K562 (cell line): ENCODE measurements at regions of chr2 and their contacts with region 1.

Region 1: GRCh38 chr2:223101340-223102039 is 49.5 kb downstream of the KCNE4 start:
- DNase-seq: peak; percentile 36 to 71 (median 50)
- ATAC-seq: peak; percentile 97
- H3K4me3 ChIP-seq: no peak overlapping the region
- H3K27ac ChIP-seq: no peak overlapping the region
- H3K4me1 ChIP-seq: peaks cover 0 to 6% of the 10 kb centered on the region in 2 experiments; a peak in 3 of 5 replicates
- H3K27me3 ChIP-seq: no peaks in the 10 kb centered on the region; a peak in 2 of 5 replicates
- CTCF ChIP-seq: peak; percentile 60 to 74 (median 72)
- EP300 ChIP-seq: 0 out of 2 replicates have a peak, but pooled peaks have one; percentile 12
- POLR2A ChIP-seq: no peak
- RAD21 ChIP-seq: peak; percentile 77 to 92

Region 2: DNA sequence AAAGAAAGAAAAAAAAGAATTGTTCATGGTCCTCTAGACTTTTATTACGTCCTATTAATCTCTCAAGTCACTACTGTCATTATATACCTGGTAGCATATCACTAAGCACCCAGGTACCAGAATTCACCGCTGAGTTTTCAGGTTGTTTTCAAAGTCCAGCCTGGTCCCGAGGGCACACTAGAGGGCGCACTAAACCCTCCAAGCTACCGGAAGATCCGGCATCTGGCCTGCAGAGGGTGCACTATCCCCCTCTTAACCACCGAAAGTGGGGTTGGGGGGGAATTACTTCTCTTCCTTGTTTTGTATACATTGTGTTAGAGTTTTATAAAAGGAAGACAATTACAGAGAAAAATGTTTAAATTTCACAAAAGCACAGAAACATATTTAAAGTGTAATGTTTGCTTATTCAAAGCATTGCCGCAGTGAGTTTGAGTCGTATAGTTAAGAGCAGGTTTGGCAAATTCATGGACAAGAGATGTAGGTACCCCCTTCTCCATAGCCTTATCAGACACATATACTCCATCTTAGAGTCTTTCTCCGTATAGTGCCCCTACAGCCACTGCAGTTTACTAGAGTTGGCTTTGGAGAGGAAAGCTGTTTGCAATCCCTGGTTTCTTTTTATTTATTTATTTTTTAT is 410.8 kb before region 1 on chr2:
- CTCF ChIA-PET with region 1: no interaction called
- POLR2A ChIA-PET with region 1: no interaction called
- in situ Hi-C with region 1: no loop called
- intact Hi-C with region 1: loop called (anchors 5 kb)
- DNase-seq: peak; percentile 81 to 86 (median 82)
- ATAC-seq: peak; percentile 98
- H3K4me3 ChIP-seq: no peak overlapping the region
- H3K27ac ChIP-seq: no peak overlapping the region
- H3K4me1 ChIP-seq: peaks cover 0 to 4% of the 10 kb centered on the region in 2 experiments; a peak in 1 of 5 replicates
- H3K27me3 ChIP-seq: no peaks in the 10 kb centered on the region
- CTCF ChIP-seq: peak; percentile 99 to 100 (median 100)
- EP300 ChIP-seq: no peak
- POLR2A ChIP-seq: no peak
- RAD21 ChIP-seq: peak; percentile 72 to 90

Region 3: GRCh38 chr2:222969491-222969890 is 132.0 kb before region 1 on chr2:
- CTCF ChIA-PET with region 1: interaction called, 5 read pairs
- POLR2A ChIA-PET with region 1: interaction called, 3 read pairs
- in situ Hi-C with region 1: no loop called
- intact Hi-C with region 1: loop called (anchors 1 kb)
- DNase-seq: no peak
- ATAC-seq: no peak
- H3K4me3 ChIP-seq: no peak overlapping the region
- H3K27ac ChIP-seq: no peak overlapping the region
- H3K4me1 ChIP-seq: no peaks in the 10 kb centered on the region
- H3K27me3 ChIP-seq: peaks cover 0 to 4% of the 10 kb centered on the region in 2 experiments; a peak in 2 of 5 replicates
- CTCF ChIP-seq: no peak
- EP300 ChIP-seq: no peak
- POLR2A ChIP-seq: no peak
- RAD21 ChIP-seq: no peak

Region 4: GRCh38 chr2:222976521-222977076 is 124.9 kb before region 1 on chr2:
- CTCF ChIA-PET with region 1: interaction called, 5 read pairs
- POLR2A ChIA-PET with region 1: interaction called, 3 read pairs
- in situ Hi-C with region 1: loop called (anchors 5 kb)
- intact Hi-C with region 1: loop called (anchors 1 kb)
- DNase-seq: no peak
- ATAC-seq: no peak
- H3K4me3 ChIP-seq: no peak overlapping the region
- H3K27ac ChIP-seq: no peak overlapping the region
- H3K4me1 ChIP-seq: no peaks in the 10 kb centered on the region
- H3K27me3 ChIP-seq: 0 out of 5 replicates have a peak, but pooled peaks cover 0 to 4% of the 10 kb centered on the region in 2 experiments
- CTCF ChIP-seq: no peak
- EP300 ChIP-seq: no peak
- POLR2A ChIP-seq: no peak
- RAD21 ChIP-seq: no peak

Region 5: GRCh38 chr2:222982010-222982908 is 119.2 kb before region 1 on chr2:
- CTCF ChIA-PET with region 1: no interaction called
- POLR2A ChIA-PET with region 1: no interaction called
- in situ Hi-C with region 1: loop called (anchors 5 kb)
- intact Hi-C with region 1: loop called (anchors 1 kb)
- DNase-seq: peak in 2 of 4 experiments; percentile 21 to 56
- ATAC-seq: peak; percentile 99
- H3K4me3 ChIP-seq: no peak overlapping the region
- H3K27ac ChIP-seq: no peak overlapping the region; the same call in 2 of the 3 replicates
- H3K4me1 ChIP-seq: peaks cover 0 to 6% of the 10 kb centered on the region in 2 experiments; a peak in 1 of 5 replicates
- H3K27me3 ChIP-seq: no peaks in the 10 kb centered on the region
- CTCF ChIP-seq: peak; percentile 58 to 69 (median 58)
- EP300 ChIP-seq: peak; percentile 61; the same call in 1 of the 2 replicates
- POLR2A ChIP-seq: no peak
- RAD21 ChIP-seq: peak; percentile 85 to 93

Region 6: DNA sequence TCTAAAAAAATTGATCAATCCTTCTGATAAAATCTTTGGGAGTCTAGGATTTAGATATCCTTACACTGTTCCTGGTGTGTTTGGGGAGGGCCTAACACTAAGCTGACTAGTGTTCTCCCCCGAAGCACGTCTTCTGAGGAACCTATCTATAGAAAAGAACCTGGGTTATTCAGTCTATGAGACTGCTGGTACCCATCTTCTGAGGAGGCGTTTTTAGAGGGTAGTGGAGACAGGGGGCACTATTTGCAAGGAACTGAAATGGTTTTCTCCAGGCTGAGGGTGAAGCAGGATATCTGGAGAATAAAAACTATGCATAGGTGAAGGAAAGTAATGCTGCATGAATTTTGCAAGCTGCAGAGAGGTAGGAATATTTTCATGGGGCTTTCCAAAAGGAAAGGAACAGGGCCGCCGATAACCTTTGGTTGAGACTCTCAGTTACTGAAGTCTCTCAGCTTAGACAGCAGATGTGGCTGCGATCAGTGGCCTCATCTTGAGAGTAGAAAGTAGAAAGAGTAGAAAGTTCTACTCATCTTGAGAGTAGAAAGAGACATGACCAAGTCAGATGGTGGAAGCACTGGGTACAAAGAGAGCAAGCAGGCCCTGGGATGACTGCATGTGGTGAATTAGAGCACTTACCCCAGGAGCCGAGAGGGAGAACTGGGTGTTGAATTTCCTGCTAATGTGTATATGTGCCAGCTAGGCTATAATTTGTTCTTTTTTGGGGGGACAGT is 81.3 kb before region 1 on chr2:
- CTCF ChIA-PET with region 1: no interaction called
- POLR2A ChIA-PET with region 1: no interaction called
- in situ Hi-C with region 1: no loop called
- intact Hi-C with region 1: loop called (anchors 1 kb)
- DNase-seq: no peak
- ATAC-seq: no peak
- H3K4me3 ChIP-seq: no peak overlapping the region
- H3K27ac ChIP-seq: no peak overlapping the region
- H3K4me1 ChIP-seq: no peaks in the 10 kb centered on the region
- H3K27me3 ChIP-seq: no peaks in the 10 kb centered on the region
- CTCF ChIP-seq: no peak; a peak in 1 of 6 replicates
- EP300 ChIP-seq: no peak
- POLR2A ChIP-seq: no peak
- RAD21 ChIP-seq: peak; percentile 21 to 44; a peak in 3 of 4 replicates

Region 7: DNA sequence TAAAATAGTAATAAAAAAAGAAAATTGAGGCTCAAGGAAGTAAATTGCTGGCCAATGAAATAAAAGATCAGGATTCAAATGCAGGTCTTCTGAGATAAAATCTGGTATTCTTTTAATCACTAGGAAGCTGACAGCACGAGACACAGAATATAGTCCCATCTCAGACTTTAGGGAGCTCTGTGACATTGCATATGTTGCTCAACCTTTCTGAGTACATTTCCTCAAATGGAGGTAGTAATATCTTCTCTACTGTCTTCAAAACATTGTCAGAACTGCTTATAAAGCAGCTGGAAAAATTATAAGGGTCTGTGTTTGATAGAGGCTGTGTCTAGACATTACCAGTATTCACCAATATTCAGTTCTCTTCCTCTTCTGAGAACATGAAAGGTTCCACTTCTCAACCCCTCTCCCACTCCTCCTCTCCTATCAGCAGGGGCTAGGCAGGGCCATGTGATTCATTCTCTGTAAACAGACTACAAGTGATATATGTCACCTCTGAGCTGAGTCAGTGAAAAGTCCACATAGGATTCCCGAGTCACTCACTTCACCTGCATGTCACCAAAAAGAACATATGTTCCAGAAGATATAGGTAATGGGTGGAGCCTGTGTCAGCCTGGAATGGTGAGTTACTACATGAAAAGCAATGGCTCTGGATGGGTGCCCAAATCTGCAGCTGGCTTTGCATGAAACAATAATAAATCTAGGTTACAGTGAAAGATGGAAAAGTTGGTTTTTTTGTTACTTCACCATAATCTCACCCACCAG is 42.4 kb before region 1 on chr2:
- CTCF ChIA-PET with region 1: no interaction called
- POLR2A ChIA-PET with region 1: no interaction called
- in situ Hi-C with region 1: no loop called
- intact Hi-C with region 1: loop called (anchors 1 kb)
- DNase-seq: peak; percentile 48 to 87 (median 66)
- ATAC-seq: peak; percentile 91
- H3K4me3 ChIP-seq: no peak overlapping the region
- H3K27ac ChIP-seq: peak overlapping the region; percentile 65; the same call in 2 of the 3 replicates
- H3K4me1 ChIP-seq: peaks cover 3 to 44% of the 10 kb centered on the region in 2 experiments; a peak in 3 of 5 replicates
- H3K27me3 ChIP-seq: no peaks in the 10 kb centered on the region
- CTCF ChIP-seq: no peak
- EP300 ChIP-seq: peak; percentile 87
- POLR2A ChIP-seq: no peak
- RAD21 ChIP-seq: no peak

Region 8: DNA sequence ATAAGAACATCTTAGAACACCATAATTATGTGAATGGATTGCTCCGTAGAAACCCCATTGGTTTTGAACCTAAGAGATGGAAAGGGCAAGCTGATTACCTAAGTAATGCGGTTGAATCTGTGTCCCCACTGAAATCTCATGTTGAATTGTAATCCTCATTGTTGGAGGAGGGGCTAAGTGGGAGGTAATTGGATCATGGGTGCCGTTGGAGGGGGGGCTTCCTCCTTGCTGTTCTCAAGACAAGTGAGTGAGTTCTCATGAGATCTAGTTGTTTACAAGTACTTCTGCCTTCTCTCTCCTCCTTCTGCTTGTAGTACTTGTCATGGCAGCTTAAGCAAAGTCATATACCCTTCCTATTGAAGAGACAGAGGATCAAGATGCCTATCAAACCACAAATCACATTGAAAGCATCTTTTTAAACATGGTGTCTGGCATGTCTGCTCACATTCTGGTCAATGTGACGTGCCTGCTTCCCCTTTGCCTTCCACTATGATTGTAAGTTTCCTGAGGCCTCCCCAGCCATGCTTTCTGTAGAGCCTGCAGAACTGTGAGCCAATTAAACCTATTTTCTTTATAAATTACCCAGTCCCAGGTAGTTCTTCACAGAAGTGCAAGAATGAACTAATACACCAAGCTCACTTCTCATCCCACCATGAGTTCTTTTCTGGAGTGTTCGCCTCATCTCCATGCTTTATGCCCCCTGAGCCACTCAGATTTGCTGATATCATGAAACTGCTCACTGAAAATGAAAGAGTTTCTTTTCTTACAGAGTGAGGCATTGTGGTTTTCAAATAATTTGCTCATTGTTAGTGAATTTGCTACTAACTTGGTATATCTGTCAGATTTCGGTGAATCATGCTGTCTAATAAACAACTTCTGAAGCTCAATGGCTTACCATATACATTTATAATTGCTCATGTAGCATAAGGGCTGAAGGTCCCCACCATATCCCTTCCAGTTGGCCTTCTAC is 25.9 kb before region 1 on chr2:
- CTCF ChIA-PET with region 1: no interaction called
- POLR2A ChIA-PET with region 1: no interaction called
- in situ Hi-C with region 1: no loop called
- intact Hi-C with region 1: no loop called
- DNase-seq: no peak
- ATAC-seq: no peak
- H3K4me3 ChIP-seq: no peak overlapping the region
- H3K27ac ChIP-seq: no peak overlapping the region
- H3K4me1 ChIP-seq: no peaks in the 10 kb centered on the region; a peak in 2 of 5 replicates
- H3K27me3 ChIP-seq: no peaks in the 10 kb centered on the region
- CTCF ChIP-seq: no peak
- EP300 ChIP-seq: no peak
- POLR2A ChIP-seq: no peak
- RAD21 ChIP-seq: no peak